WTC11 (cell line): ENCODE measurements at regions of chr15 and their contacts with region 1.

Region 1: DNA sequence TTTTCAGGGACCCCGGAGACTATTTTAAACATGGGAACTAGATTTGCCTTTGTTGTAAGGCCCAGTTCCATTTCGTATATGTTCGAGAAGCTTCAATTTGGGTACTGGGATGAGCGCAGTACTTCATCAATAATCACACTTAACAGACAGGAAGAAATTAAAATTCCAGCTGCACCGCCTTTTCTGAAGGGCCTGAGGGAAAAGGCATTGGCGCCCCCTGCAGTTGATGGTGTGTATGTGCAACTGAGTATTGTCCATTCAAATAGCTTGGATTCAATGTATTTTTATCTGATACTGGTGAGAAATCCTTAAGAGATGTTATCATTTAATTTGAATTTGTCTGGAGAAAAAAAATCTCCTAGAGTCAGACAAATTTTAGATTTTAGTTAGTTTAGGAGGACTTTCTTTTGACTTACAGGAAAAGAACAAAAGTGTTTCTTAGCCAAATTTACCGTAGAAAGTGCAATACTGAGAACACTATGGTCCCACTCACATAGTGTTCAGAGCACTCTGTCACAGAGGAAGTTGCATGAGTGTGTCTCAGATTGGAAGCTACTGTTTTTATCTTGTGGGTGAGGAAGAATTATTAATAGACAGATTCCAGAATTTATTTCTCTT is 5.4 kb upstream of the ALDH1A2 start:
- DNase-seq: peak; percentile 69
- ATAC-seq: no peak; the same call in 1 of the 2 replicates
- H3K4me3 Mint-ChIP-seq: no peak overlapping the region
- H3K27ac Mint-ChIP-seq: no peak overlapping the region
- H3K4me1 Mint-ChIP-seq: peaks cover 9% of the 10 kb centered on the region; the same call in 1 of the 2 replicates
- H3K27me3 Mint-ChIP-seq: peaks cover 58% of the 10 kb centered on the region
- CTCF ChIP-seq: peak; percentile 85

Region 2: GRCh38 chr15:57743424-57743823 is 327.5 kb before region 1 on chr15:
- CTCF ChIA-PET with region 1: interaction called, 23 read pairs
- POLR2A ChIA-PET with region 1: no interaction called
- DNase-seq: peak; percentile 32
- ATAC-seq: peak; percentile 63
- H3K4me3 Mint-ChIP-seq: no peak overlapping the region
- H3K27ac Mint-ChIP-seq: no peak overlapping the region
- H3K4me1 Mint-ChIP-seq: peaks cover 27% of the 10 kb centered on the region
- H3K27me3 Mint-ChIP-seq: peaks cover 2% of the 10 kb centered on the region; the same call in 1 of the 2 replicates
- CTCF ChIP-seq: no peak

Region 3: GRCh38 chr15:57769266-57769665 is 301.6 kb before region 1 on chr15:
- CTCF ChIA-PET with region 1: interaction called, 10 read pairs
- POLR2A ChIA-PET with region 1: no interaction called
- DNase-seq: no peak
- ATAC-seq: no peak
- H3K4me3 Mint-ChIP-seq: no peak overlapping the region
- H3K27ac Mint-ChIP-seq: no peak overlapping the region
- H3K4me1 Mint-ChIP-seq: peaks cover 10% of the 10 kb centered on the region
- H3K27me3 Mint-ChIP-seq: no peaks in the 10 kb centered on the region
- CTCF ChIP-seq: no peak

Region 4: GRCh38 chr15:57866149-57866736 is 204.7 kb before region 1 on chr15:
- CTCF ChIA-PET with region 1: interaction called, 38 read pairs
- POLR2A ChIA-PET with region 1: no interaction called
- DNase-seq: peak; percentile 82
- ATAC-seq: peak; percentile 83
- H3K4me3 Mint-ChIP-seq: no peak overlapping the region
- H3K27ac Mint-ChIP-seq: no peak overlapping the region
- H3K4me1 Mint-ChIP-seq: no peaks in the 10 kb centered on the region
- H3K27me3 Mint-ChIP-seq: no peaks in the 10 kb centered on the region; the same call in 1 of the 2 replicates
- CTCF ChIP-seq: no peak; the same call in 1 of the 2 replicates

Region 5: GRCh38 chr15:57969354-57969753 is 101.6 kb before region 1 on chr15:
- CTCF ChIA-PET with region 1: interaction called, 24 read pairs
- POLR2A ChIA-PET with region 1: no interaction called
- DNase-seq: no peak
- ATAC-seq: 0 out of 2 replicates have a peak, but pooled peaks have one; percentile 43
- H3K4me3 Mint-ChIP-seq: no peak overlapping the region
- H3K27ac Mint-ChIP-seq: no peak overlapping the region
- H3K4me1 Mint-ChIP-seq: peaks cover 18% of the 10 kb centered on the region
- H3K27me3 Mint-ChIP-seq: peaks cover 3% of the 10 kb centered on the region; the same call in 1 of the 2 replicates
- CTCF ChIP-seq: no peak

Region 6: DNA sequence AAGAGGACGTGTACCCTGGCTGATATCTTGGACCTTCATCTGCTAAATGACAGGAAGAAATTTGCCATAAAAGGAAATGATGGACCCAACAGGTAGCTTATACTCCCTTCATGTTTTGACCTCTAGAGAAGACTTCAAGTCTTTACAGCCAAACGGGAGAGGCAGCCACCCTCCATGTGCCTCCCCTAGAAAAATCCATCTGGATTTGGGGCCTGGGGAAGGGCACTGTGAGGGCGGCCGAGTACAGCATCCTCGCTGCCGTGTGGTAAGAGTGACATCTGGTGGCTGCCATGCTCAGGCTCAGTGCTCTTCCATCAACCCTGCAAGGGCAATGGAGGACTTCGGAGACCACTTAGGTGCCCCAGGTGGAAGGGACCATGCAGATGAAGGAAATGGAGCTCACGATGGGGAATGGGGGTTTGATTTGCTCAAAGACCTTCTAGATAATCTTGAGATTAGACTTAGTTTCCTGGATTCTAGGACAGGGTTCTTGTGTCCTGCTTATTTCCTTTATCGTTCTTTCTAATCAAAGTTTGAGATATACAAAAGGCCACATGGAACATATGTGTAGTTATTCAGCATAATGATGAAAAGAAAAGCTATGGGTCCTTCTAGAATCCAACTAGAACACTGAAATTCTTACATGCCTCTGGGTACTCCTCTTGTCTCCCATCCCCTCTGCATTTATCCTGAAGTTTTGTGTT is 111.7 kb after region 1 on chr15:
- CTCF ChIA-PET with region 1: interaction called, 32 read pairs
- POLR2A ChIA-PET with region 1: no interaction called
- DNase-seq: peak; percentile 71
- ATAC-seq: peak; percentile 100
- H3K4me3 Mint-ChIP-seq: no peak overlapping the region
- H3K27ac Mint-ChIP-seq: no peak overlapping the region
- H3K4me1 Mint-ChIP-seq: peaks cover 7% of the 10 kb centered on the region; the same call in 1 of the 2 replicates
- H3K27me3 Mint-ChIP-seq: no peaks in the 10 kb centered on the region; the same call in 1 of the 2 replicates
- CTCF ChIP-seq: peak; percentile 62

Region 7: GRCh38 chr15:58361291-58361759 is 290.4 kb after region 1 on chr15:
- CTCF ChIA-PET with region 1: no interaction called
- POLR2A ChIA-PET with region 1: no interaction called
- DNase-seq: no peak
- ATAC-seq: no peak
- H3K4me3 Mint-ChIP-seq: no peak overlapping the region
- H3K27ac Mint-ChIP-seq: no peak overlapping the region
- H3K4me1 Mint-ChIP-seq: peaks cover 15% of the 10 kb centered on the region
- H3K27me3 Mint-ChIP-seq: peaks cover 3% of the 10 kb centered on the region; the same call in 1 of the 2 replicates
- CTCF ChIP-seq: no peak